Activated CD4-positive, alpha-beta T cell treated with anti-CD3 and anti-CD28 coated beads, Interleukin-2, amount 10 ng/mL, durations not matched to agents 24 days and 14 days (primary cell): ENCODE measurements at regions of chr15 and their contacts with region 1.

Region 1: DNA sequence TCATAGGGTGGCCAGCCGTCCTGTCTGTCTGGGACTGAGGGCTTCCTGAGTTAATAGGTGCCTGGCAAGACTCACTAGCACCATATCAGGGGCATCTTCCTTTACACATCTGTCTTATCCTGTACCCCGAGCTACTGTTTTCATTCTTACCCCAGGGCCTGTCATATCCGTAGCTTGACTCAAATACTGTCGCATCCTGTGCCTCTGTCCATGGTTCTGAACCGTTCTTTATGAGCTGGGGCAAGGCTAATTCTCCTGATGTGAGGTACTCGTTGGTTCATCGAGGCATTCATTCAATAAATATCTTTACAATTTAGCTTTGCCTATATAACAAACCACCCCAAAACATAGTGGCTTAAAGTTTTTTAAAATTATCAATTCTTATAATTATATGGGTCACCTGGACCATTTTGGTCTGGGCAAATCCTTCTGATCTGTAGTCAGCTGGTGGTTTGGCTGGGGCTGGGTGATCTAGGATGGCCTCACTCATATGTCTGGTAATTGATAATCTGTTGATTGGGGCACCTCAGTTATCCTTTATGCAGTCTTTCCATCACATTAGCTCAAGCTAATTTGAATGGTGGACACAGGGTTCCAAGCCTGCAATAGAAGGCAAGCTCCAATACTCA is 121.2 kb downstream of the TLE3 start:
- DNase-seq: peak; percentile 90
- H3K4me3 Mint-ChIP-seq: no peak overlapping the region
- H3K27ac Mint-ChIP-seq: no peak overlapping the region
- H3K4me1 Mint-ChIP-seq: no peaks in the 10 kb centered on the region
- H3K27me3 Mint-ChIP-seq: peaks cover 21% of the 10 kb centered on the region

Region 2: GRCh38 chr15:69729161-69729748 is 247.2 kb before region 1 on chr15:
- intact Hi-C with region 1: loop called (anchors 10 kb)
- DNase-seq: peak; percentile 92
- H3K4me3 Mint-ChIP-seq: no peak overlapping the region
- H3K27ac Mint-ChIP-seq: peak overlapping the region; percentile 12
- H3K4me1 Mint-ChIP-seq: peaks cover 58% of the 10 kb centered on the region
- H3K27me3 Mint-ChIP-seq: peaks cover 14% of the 10 kb centered on the region

Region 3: GRCh38 chr15:69997697-69998273 is 21.3 kb after region 1 on chr15:
- intact Hi-C with region 1: no loop called
- DNase-seq: no peak
- H3K4me3 Mint-ChIP-seq: no peak overlapping the region
- H3K27ac Mint-ChIP-seq: no peak overlapping the region
- H3K4me1 Mint-ChIP-seq: peaks cover 2% of the 10 kb centered on the region
- H3K27me3 Mint-ChIP-seq: peaks cover 22% of the 10 kb centered on the region